ENCODE measurements at regions of chr17 and their contacts with region 1.

Region 1: DNA sequence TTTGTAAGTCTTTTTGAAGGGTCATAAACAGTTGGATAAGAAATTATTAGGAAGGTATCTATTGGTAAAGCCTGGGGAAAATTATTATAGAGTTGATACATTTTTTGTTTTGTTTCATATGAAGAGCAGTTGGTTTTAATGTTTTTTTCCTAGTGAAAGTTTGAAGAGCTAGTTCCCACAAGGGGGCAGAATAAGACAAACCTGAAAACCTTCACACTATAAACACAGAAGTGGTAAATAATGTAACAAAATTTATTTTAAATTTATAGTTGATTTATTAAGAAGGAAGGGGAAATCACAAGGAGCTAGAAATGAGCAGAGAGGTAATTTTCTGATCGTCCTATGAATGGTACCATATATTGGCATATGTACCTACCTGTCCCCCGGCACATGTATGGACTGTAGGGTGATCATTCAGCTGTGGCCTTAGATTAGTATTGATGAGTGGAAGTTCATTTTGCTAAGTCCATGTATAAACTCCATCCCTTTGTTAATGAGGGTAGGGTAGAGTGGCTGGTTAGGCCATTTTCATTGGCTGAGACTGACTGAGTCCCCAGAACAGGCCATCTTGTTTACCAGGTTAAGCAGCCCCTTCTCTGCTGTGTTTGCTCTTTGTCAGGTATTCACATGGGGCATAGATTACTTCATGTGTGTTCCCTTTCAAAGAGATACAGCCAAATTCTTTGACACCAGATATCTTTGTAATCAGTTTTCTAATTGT is 116.4 kb downstream of the TANC2 start:
- DNase-seq: no peak

Region 2: DNA sequence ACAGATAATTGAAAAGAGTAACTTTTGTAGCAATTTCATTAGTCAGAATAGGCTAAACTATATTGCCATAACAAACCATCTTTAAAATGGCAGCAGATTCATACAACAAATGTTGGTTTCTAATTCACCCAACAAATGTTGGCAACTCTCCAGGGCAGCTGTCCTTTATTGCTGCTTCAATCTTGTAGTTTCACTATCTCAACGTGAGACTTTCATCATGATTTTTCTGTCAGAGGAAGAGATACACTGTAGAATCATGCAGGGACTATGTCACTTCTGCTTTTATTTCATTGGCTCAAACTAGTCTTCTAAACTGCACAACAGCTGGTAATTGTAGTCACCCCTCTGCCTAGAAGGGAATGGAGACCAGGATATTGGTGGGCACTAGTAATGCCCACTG is 57.8 kb after region 1 on chr17:
- intact Hi-C with region 1: no loop called
- DNase-seq: no peak

Region 3: GRCh38 chr17:63406689-63407330 is 324.4 kb after region 1 on chr17:
- intact Hi-C with region 1: loop called (anchors 10 kb)
- DNase-seq: no peak

Region 4: GRCh38 chr17:63419949-63420867 is 337.8 kb after region 1 on chr17:
- intact Hi-C with region 1: loop called in 1 of 2 experiments (anchors 10 kb)
- DNase-seq: no peak

Measured in posterior vena cava (tissue), 2 donors.